Calu3 (cell line): ENCODE measurements at regions of chr5 and their contacts with region 1.

Region 1: DNA sequence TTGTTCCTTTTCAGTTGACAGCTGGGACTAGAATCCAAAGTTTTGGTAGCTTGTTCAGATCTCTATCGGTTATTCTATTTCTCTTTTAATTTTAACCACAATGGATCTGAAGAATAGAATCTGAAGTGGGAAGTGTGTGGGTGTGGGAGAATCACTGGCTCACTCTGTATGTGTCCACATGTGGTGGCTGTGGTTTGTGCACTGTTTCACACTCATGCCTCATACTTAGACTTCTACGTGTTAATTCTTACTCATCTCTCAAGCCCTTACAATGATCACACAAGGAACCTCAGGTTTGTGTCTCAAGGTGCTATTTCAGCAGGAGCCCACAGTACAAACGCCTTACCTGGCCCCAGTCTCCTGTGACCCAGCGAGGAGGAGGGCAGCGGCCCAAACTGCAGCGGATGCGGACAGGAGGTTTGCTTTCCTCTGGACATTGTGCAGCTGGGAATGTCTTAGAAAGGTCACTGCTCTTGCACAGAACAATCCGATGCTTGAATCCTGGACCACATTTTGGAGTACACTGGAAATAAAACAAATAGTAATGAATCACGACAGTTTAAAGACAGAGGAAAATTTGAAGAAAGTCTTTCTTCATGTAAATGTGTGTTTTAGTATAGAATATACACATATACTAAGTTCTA is 309.1 kb downstream of the ADAMTS6 start:
- DNase-seq: no peak
- H3K4me3 Mint-ChIP-seq: no peak overlapping the region
- H3K27ac Mint-ChIP-seq: no peak overlapping the region
- H3K4me1 Mint-ChIP-seq: no peaks in the 10 kb centered on the region
- H3K27me3 Mint-ChIP-seq: no peaks in the 10 kb centered on the region
- CTCF ChIP-seq: no peak

Region 2: GRCh38 chr5:65157906-65158603 is 14.6 kb before region 1 on chr5:
- CTCF ChIA-PET with region 1: no interaction called
- intact Hi-C with region 1: loop called (anchors 1 kb)
- DNase-seq: peak; percentile 22
- H3K4me3 Mint-ChIP-seq: no peak overlapping the region
- H3K27ac Mint-ChIP-seq: no peak overlapping the region
- H3K4me1 Mint-ChIP-seq: peaks cover 20% of the 10 kb centered on the region
- H3K27me3 Mint-ChIP-seq: no peaks in the 10 kb centered on the region
- CTCF ChIP-seq: no peak

Region 3: GRCh38 chr5:65364907-65365306 is 192.3 kb after region 1 on chr5:
- CTCF ChIA-PET with region 1: no interaction called
- intact Hi-C with region 1: no loop called
- DNase-seq: no peak
- H3K4me3 Mint-ChIP-seq: no peak overlapping the region
- H3K27ac Mint-ChIP-seq: no peak overlapping the region
- H3K4me1 Mint-ChIP-seq: no peaks in the 10 kb centered on the region
- H3K27me3 Mint-ChIP-seq: no peaks in the 10 kb centered on the region
- CTCF ChIP-seq: no peak